ENCODE measurements at regions of chr11 and their contacts with region 1.

Region 1: GRCh38 chr11:65779851-65780577 is 762 bp downstream of the AP5B1 start:
- DNase-seq: peak; percentile 92
- H3K4me3 Mint-ChIP-seq: peak overlapping the region; percentile 87
- H3K27ac Mint-ChIP-seq: peak overlapping the region; percentile 76
- H3K4me1 Mint-ChIP-seq: peaks cover 17% of the 10 kb centered on the region
- H3K27me3 Mint-ChIP-seq: peaks cover 4% of the 10 kb centered on the region

Region 2: DNA sequence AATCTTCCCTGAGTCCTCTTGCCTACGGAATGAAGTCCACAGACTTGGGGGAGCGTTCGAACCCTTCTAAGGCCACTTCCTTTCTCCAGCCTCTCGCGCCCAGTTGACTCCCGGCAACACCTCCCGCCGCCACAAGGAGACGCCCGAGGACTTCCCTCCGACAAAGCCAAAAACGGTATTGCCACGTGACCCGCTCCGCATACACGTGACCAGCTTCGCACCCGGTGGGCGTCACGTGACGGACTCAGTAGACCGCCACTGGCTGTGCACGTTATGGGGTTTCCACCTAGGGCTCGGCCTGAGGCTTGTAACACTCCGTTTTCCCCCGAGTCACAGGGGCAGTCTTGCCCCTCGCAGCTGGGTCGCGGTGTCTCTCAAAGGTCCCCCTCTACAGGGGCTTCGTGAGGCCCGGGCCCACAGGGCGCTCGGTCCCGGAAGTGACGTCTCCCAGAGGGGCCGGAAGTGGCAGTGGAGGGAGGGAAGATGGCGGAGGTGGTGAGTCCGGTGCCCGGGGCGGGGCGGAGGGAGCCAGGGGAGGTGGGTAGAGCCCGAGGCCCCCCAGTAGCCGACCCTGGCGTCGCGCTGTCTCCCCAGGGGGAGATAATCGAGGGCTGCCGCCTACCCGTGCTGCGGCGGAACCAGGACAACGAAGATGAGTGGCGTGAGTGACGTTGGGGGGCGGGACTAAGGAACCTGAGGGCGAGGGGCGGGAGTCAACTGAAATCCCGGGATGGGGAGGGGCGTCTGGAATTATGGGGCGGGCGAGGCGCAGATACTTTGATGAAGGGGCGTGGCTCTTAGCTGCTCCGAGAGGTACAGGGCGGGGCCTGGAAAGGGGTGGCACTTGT is 68.0 kb before region 1 on chr11 and contains the start of gene KAT5:
- CTCF ChIA-PET with region 1: interaction called, 72 read pairs
- POLR2A ChIA-PET with region 1: interaction called, 6 read pairs
- intact Hi-C with region 1: no loop called
- DNase-seq: peak; percentile 99
- H3K4me3 Mint-ChIP-seq: peak within 1 kb of the TSS; percentile 90
- H3K27ac Mint-ChIP-seq: peak within 1 kb of the TSS; percentile 97
- H3K4me1 Mint-ChIP-seq: peaks cover 27% of the 10 kb centered on the region
- H3K27me3 Mint-ChIP-seq: no peaks in the 10 kb centered on the region
- total RNA-seq, gene KAT5: 55.9 to 61.6 TPM

Region 3: GRCh38 chr11:65739022-65739421 is 41.0 kb before region 1 on chr11:
- CTCF ChIA-PET with region 1: interaction called, 10 read pairs
- POLR2A ChIA-PET with region 1: no interaction called
- intact Hi-C with region 1: no loop called
- DNase-seq: no peak
- H3K4me3 Mint-ChIP-seq: no peak overlapping the region
- H3K27ac Mint-ChIP-seq: no peak overlapping the region
- H3K4me1 Mint-ChIP-seq: no peaks in the 10 kb centered on the region
- H3K27me3 Mint-ChIP-seq: peaks cover 14% of the 10 kb centered on the region

Region 4: DNA sequence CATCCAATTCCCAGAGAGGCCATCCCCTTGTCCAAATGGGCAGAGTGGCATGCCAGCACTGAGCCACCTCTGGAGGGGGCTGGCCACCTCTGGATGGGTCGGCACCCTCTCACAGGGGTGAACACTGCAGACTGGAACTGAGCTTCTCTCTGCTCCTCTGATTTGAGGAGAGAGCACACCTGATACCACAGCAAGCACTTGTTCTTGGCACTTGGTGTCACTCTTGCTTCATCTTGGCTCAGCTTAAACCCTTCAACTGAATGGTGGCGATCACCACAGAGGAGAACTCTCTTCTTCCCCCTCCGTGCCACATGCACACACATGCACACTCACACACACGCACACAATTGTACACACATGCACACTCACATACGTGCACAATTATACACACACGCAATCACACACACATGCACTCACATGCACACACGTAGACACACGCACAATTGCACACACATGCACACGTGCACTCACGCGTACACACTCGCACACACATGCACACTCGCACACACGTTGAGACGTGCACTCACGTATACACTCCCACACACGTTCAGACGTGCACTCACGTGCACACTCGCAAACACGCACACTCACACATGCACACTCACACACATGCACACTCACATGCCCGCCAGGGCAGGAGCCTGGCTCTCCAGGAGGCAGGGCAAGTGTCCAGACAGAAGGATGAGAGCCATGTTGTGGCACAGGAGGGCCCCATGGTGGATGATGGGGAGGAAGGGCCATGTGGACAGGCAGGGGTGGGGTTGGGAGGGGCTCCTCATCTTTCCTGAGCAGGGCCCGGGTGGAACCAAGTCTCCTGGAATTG is 30.2 kb after region 1 on chr11:
- CTCF ChIA-PET with region 1: interaction called, 126 read pairs
- POLR2A ChIA-PET with region 1: no interaction called
- intact Hi-C with region 1: no loop called
- DNase-seq: no peak
- H3K4me3 Mint-ChIP-seq: no peak overlapping the region
- H3K27ac Mint-ChIP-seq: no peak overlapping the region
- H3K4me1 Mint-ChIP-seq: no peaks in the 10 kb centered on the region
- H3K27me3 Mint-ChIP-seq: peaks cover 3% of the 10 kb centered on the region

Region 5: GRCh38 chr11:65833297-65834030 is 53.5 kb after region 1 on chr11 and contains the start of gene SNX32:
- CTCF ChIA-PET with region 1: interaction called, 25 read pairs
- POLR2A ChIA-PET with region 1: no interaction called
- intact Hi-C with region 1: no loop called
- DNase-seq: peak; percentile 98
- H3K4me3 Mint-ChIP-seq: no peak within 1 kb of the TSS
- H3K27ac Mint-ChIP-seq: no peak within 1 kb of the TSS
- H3K4me1 Mint-ChIP-seq: peaks cover 21% of the 10 kb centered on the region
- H3K27me3 Mint-ChIP-seq: no peaks in the 10 kb centered on the region
- total RNA-seq, gene SNX32: 2.0 to 2.7 TPM

Region 6: DNA sequence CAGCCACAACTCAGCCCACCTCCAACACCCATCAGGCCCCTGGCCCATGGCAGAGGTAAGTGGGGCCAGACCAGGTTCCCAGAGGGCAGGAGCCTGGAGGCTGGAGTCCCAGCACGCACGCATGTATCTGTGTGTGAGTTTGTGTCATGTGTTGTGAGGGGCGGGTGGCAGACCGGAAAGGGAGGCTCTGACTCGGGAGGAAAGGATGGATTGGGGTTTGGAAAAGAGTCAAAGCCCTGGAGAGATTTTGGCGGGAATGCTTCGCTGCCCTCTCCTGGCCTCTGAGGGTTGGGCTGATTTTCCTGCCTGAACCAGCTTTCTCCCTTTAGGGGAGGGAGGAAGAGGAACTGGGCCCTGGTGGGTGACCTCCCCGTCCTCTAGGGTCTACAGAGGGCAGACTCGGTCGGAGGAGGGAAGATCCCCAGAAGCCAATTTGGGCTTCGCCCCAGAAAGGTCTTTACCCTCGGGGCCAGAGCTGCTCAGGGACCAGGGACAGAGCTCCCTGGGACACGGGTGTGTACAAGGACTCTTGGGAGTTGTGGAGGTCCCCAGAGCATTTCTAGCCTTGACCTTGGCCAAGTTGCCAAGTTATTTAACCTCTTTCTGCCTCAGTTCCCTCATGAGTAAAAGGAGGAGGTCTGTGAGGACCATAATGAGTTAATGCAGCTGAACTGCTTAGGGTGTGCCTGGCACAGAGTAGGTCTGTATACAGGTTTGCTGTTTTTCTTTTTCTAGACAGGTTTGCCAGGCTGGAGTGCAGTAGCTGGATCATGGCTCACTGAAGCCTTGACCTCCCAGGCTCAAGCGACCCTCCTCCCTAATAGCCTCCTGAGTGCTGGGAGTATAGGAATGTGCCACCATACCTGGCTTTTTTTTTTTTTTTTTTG is 131.9 kb after region 1 on chr11:
- CTCF ChIA-PET with region 1: no interaction called
- POLR2A ChIA-PET with region 1: no interaction called
- intact Hi-C with region 1: no loop called
- DNase-seq: peak; percentile 28
- H3K4me3 Mint-ChIP-seq: no peak overlapping the region
- H3K27ac Mint-ChIP-seq: no peak overlapping the region
- H3K4me1 Mint-ChIP-seq: peaks cover 19% of the 10 kb centered on the region
- H3K27me3 Mint-ChIP-seq: peaks cover 8% of the 10 kb centered on the region

Region 7: GRCh38 chr11:66720223-66720947 is 940.4 kb after region 1 on chr11:
- CTCF ChIA-PET with region 1: no interaction called
- POLR2A ChIA-PET with region 1: no interaction called
- intact Hi-C with region 1: no loop called
- DNase-seq: peak; percentile 77
- H3K4me3 Mint-ChIP-seq: no peak overlapping the region
- H3K27ac Mint-ChIP-seq: no peak overlapping the region
- H3K4me1 Mint-ChIP-seq: peaks cover 8% of the 10 kb centered on the region
- H3K27me3 Mint-ChIP-seq: peaks cover 33% of the 10 kb centered on the region

Measured in activated CD4-positive, alpha-beta memory T cell treated with anti-CD3 and anti-CD28 coated beads for 36 hours (primary cell).